ENCODE measurements at regions of chr1 and their contacts with region 1.

Region 1: DNA sequence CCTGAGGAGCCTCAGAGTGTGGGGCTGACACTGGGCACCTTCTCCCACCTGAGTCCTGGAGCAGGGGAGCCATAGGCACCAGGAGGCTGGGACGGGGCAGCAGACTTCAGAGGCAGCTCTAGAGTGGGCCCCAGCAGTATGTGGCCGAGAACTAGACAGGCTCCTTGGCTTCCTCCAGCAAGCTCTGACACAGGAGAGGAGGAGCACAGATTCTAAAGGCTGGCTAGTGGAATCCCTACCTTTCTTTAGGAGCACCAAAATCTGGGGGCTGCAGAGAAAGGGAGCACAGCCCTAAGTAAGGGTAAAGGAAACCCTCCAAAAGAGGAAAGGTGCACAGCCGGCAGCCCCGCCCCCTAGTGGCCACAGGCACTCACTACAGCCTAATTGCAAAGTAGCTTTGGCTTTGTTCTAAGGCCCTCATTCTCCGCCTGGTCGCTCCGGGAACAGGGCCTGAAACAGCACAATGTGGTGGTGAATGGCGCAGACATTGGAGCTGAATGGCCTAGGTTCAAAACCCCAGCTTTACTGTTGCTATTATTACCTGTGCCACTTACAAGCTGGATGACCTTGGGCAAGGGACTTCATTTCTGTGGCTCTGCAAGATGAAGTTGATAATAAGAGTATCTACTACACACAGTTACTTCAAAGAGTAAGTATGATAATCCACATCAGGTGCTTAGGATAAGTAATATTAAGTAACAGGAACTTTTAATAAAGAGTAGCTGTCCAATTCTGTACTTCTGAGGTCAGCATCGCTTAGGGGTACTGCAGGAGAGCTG is 8.8 kb upstream of the GUCA2A start:
- DNase-seq: peak; percentile 74
- H3K4me3 ChIP-seq: peak overlapping the region in 1 of 2 experiments; percentile 10; a peak in 1 of 4 replicates
- H3K27ac ChIP-seq: peak overlapping the region in 1 of 2 experiments; percentile 19; a peak in 2 of 4 replicates
- H3K4me1 ChIP-seq: peaks cover 14 to 46% of the 10 kb centered on the region in 2 experiments; a peak in 3 of 4 replicates
- H3K27me3 ChIP-seq: no peaks in the 10 kb centered on the region
- CTCF ChIP-seq: peak; percentile 96
- EP300 ChIP-seq: no peak
- RAD21 ChIP-seq: peak; percentile 64

Region 2: GRCh38 chr1:42146626-42147320 is 26.6 kb before region 1 on chr1:
- CTCF ChIA-PET with region 1: interaction called, 19 read pairs
- POLR2A ChIA-PET with region 1: no interaction called
- DNase-seq: peak; percentile 85
- H3K4me3 ChIP-seq: no peak overlapping the region; a peak in 1 of 4 replicates
- H3K27ac ChIP-seq: no peak overlapping the region
- H3K4me1 ChIP-seq: no peaks in the 10 kb centered on the region
- H3K27me3 ChIP-seq: peaks cover 16% of the 10 kb centered on the region
- CTCF ChIP-seq: peak; percentile 85
- EP300 ChIP-seq: no peak
- RAD21 ChIP-seq: peak; percentile 94

Region 3: DNA sequence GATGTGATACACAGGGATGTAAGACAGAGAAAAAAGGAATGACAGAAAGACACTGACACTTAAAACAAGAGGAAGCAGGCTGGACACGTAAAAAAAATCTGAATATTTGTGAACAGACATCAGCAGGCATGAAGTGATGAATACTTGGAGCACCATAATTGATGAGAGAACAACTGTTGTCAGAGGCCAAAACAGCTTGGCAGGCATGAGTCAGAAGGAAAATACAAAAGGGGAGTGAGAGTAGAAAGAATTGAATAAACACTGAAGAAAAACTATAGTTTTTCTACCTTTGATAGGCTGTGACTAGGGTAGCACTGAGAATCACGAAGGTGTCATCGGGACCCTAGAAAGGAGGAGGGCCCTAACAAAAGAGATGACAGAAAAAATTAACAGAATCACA is 12.8 kb after region 1 on chr1:
- CTCF ChIA-PET with region 1: interaction called, 27 read pairs
- POLR2A ChIA-PET with region 1: interaction called, 3 read pairs
- DNase-seq: no peak
- H3K4me3 ChIP-seq: no peak overlapping the region
- H3K27ac ChIP-seq: peak overlapping the region in 1 of 2 experiments; percentile 70; a peak in 2 of 4 replicates
- H3K4me1 ChIP-seq: peaks cover 5 to 7% of the 10 kb centered on the region in 2 experiments; a peak in 3 of 4 replicates
- H3K27me3 ChIP-seq: no peaks in the 10 kb centered on the region
- CTCF ChIP-seq: no peak
- EP300 ChIP-seq: peak in 1 of 2 experiments; percentile 29; a peak in 1 of 4 replicates
- RAD21 ChIP-seq: no peak

Region 4: DNA sequence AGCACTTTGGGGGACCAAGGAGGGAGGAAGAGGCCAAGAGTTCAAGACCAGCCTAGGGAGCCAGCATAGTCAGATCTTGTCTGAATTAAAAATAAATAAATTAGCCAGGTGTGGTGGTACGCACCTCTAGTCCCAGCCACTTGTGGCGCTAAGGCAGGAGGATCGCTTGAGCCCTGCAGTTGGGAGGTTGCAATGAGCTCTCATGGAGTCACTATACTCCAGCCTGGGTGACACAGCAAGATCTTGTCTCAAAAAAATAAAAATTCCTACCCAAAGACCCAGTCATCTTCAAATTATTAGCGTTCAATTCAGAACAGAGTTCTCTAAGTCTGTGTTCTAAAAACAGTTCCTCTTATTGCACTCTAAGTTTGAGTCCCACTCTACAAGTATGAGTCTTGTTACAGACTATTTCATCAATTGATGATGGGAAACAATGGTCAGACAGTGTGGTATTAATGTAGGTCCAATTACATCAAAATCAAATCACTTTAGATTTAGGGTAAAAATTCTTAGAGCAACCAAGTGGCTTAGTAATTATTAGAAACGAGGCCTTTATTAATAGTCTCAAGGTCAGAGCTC is 154.8 kb after region 1 on chr1:
- CTCF ChIA-PET with region 1: interaction called, 15 read pairs
- POLR2A ChIA-PET with region 1: no interaction called
- DNase-seq: no peak
- H3K4me3 ChIP-seq: no peak overlapping the region
- H3K27ac ChIP-seq: no peak overlapping the region
- H3K4me1 ChIP-seq: peaks cover 6 to 22% of the 10 kb centered on the region in 2 experiments; a peak in 3 of 4 replicates
- H3K27me3 ChIP-seq: no peaks in the 10 kb centered on the region
- CTCF ChIP-seq: no peak
- EP300 ChIP-seq: no peak
- RAD21 ChIP-seq: no peak